IMR-90 (cell line): ENCODE measurements at regions of chr4 and their contacts with region 1.

Region 1: DNA sequence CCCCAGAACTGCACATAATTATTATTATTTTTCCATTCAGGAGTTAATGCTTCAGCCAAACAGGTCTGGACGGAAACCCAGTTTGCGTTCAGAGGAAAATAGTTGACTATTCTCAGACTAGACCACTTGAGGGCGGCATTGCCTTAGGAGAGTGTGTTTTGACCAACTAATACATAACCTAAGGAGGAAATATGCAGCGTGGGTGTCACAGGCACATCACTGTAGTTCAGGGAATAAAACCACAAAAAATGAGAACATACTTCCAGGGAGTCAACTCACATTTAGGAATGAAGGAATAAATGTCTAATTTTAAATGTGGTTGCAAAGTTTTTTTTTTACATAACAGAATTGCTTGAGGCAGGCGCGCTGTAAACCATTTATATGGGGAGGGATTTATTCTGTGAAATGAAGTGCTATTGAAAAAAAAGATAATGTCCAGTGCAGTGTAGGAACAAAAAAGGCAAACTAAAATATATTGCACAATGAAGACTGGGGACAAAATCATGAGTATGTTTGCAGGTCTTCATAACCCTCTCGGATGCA is 93.3 kb downstream of the SYNPO2 start:
- DNase-seq: peak; percentile 96
- ATAC-seq: peak; percentile 89
- H3K4me3 ChIP-seq: no peak overlapping the region
- H3K27ac ChIP-seq: peak overlapping the region; percentile 21; the same call in 1 of the 2 replicates
- H3K4me1 ChIP-seq: peaks cover 18% of the 10 kb centered on the region
- H3K27me3 ChIP-seq: no peaks in the 10 kb centered on the region
- CTCF ChIP-seq: peak; percentile 92
- POLR2A ChIP-seq: no peak
- RAD21 ChIP-seq: peak; percentile 98

Region 2: GRCh38 chr4:119041951-119042560 is 60.1 kb after region 1 on chr4:
- CTCF ChIA-PET with region 1: interaction called, 5 read pairs
- POLR2A ChIA-PET with region 1: interaction called, 3 read pairs
- dilution Hi-C with region 1: no loop called
- in situ Hi-C with region 1: no loop called
- intact Hi-C with region 1: loop called (anchors 1 kb)
- DNase-seq: peak; percentile 83
- ATAC-seq: peak; percentile 63
- H3K4me3 ChIP-seq: no peak overlapping the region
- H3K27ac ChIP-seq: peak overlapping the region; percentile 100; the same call in 1 of the 2 replicates
- H3K4me1 ChIP-seq: peaks cover 12% of the 10 kb centered on the region
- H3K27me3 ChIP-seq: no peaks in the 10 kb centered on the region
- CTCF ChIP-seq: peak; percentile 77
- POLR2A ChIP-seq: no peak
- RAD21 ChIP-seq: peak; percentile 83

Region 3: DNA sequence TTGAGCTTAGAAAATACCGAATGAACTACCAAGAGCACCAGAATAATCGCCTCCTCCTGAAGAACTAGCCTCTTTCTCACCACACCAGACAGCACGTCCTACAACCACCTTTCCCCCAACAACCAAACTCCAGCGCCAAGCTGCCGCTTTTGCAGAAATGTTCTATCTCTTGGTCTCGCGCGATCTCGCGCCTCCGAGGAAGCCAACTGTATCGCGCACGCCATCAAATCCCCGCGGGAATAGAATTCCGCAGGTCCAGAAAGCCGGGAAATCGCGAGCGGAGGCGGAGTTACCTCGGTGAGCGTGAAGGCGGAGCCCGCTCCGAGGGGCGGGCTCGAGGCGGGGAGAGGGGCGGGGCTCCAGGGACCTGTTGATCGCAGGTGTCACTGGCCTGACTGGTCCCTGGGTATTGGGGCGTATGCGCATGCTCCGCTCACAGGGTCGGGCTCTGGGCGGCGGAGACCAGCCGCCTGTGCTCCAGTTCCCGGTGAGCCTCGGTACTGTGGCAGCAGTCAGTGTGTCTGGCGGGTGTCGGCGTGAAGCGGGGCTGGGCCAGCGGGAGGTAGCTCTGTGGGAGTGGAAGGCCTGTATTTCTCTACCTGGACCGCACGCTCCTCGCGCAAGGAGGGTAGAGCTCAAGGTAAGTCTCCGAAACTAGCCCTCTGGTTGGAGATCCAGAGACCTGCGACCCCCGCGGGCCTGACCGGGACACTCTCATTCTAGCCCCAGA is 230.5 kb after region 1 on chr4 and contains the start of gene USP53:
- CTCF ChIA-PET with region 1: no interaction called
- POLR2A ChIA-PET with region 1: no interaction called
- dilution Hi-C with region 1: no loop called
- in situ Hi-C with region 1: loop called (anchors 10 kb)
- intact Hi-C with region 1: loop called (anchors 1 kb)
- DNase-seq: peak; percentile 97
- ATAC-seq: peak; percentile 93
- H3K4me3 ChIP-seq: peak within 1 kb of the TSS; percentile 74
- H3K27ac ChIP-seq: peak within 1 kb of the TSS; percentile 90
- H3K4me1 ChIP-seq: peaks cover 3% of the 10 kb centered on the region; the same call in 1 of the 2 replicates
- H3K27me3 ChIP-seq: no peaks in the 10 kb centered on the region
- CTCF ChIP-seq: no peak
- POLR2A ChIP-seq: peak; percentile 97
- RAD21 ChIP-seq: peak; percentile 25
- total RNA-seq, gene USP53: 24.0 and 34.7 TPM in 2 replicates

Region 4: GRCh38 chr4:119286377-119287002 is 304.6 kb after region 1 on chr4:
- CTCF ChIA-PET with region 1: interaction called, 6 read pairs
- POLR2A ChIA-PET with region 1: no interaction called
- dilution Hi-C with region 1: loop called (anchors 10 kb)
- in situ Hi-C with region 1: loop called (anchors 5 kb)
- intact Hi-C with region 1: loop called (anchors 1 kb)
- DNase-seq: peak; percentile 83
- ATAC-seq: peak; percentile 53; the same call in 1 of the 2 replicates
- H3K4me3 ChIP-seq: no peak overlapping the region
- H3K27ac ChIP-seq: no peak overlapping the region; the same call in 1 of the 2 replicates
- H3K4me1 ChIP-seq: no peaks in the 10 kb centered on the region
- H3K27me3 ChIP-seq: no peaks in the 10 kb centered on the region
- CTCF ChIP-seq: peak; percentile 70
- POLR2A ChIP-seq: no peak
- RAD21 ChIP-seq: peak; percentile 79

Region 5: GRCh38 chr4:119490335-119490734 is 508.4 kb after region 1 on chr4:
- CTCF ChIA-PET with region 1: interaction called, 3 read pairs
- POLR2A ChIA-PET with region 1: no interaction called
- dilution Hi-C with region 1: no loop called
- in situ Hi-C with region 1: loop called (anchors 10 kb)
- intact Hi-C with region 1: loop called (anchors 1 kb)
- DNase-seq: peak; percentile 69
- ATAC-seq: peak; percentile 45
- H3K4me3 ChIP-seq: no peak overlapping the region
- H3K27ac ChIP-seq: no peak overlapping the region
- H3K4me1 ChIP-seq: no peaks in the 10 kb centered on the region
- H3K27me3 ChIP-seq: no peaks in the 10 kb centered on the region
- CTCF ChIP-seq: peak; percentile 43
- POLR2A ChIP-seq: no peak; the same call in 1 of the 2 replicates
- RAD21 ChIP-seq: peak; percentile 38

Region 6: DNA sequence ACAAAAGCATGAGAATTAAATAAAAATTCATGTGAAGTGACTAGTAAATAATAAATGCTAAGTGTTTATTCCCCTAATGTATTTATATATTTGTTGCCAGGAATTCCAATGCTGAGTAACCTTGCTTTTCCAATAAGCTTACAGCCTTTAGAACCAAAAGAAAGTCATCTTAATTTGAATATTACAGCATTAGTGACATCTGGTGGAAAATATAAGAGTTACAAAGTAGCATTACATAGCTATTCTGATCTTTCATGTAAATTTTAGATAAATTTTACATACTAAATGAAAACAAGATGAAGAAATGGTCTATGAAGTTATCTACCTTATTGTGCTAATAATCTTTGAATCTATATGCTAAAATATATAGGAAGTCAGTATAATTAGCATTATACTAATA is 1074.3 kb after region 1 on chr4:
- CTCF ChIA-PET with region 1: no interaction called
- POLR2A ChIA-PET with region 1: no interaction called
- dilution Hi-C with region 1: no loop called
- in situ Hi-C with region 1: loop called (anchors 5 kb)
- intact Hi-C with region 1: loop called (anchors 2 kb)
- DNase-seq: peak; percentile 70
- ATAC-seq: peak; percentile 71
- H3K4me3 ChIP-seq: no peak overlapping the region
- H3K27ac ChIP-seq: no peak overlapping the region
- H3K4me1 ChIP-seq: peaks cover 7% of the 10 kb centered on the region
- H3K27me3 ChIP-seq: no peaks in the 10 kb centered on the region
- CTCF ChIP-seq: peak; percentile 55
- POLR2A ChIP-seq: no peak
- RAD21 ChIP-seq: peak; percentile 64